HEK293 (cell line): ENCODE measurements at regions of chr11 and their contacts with region 1.

Region 1: DNA sequence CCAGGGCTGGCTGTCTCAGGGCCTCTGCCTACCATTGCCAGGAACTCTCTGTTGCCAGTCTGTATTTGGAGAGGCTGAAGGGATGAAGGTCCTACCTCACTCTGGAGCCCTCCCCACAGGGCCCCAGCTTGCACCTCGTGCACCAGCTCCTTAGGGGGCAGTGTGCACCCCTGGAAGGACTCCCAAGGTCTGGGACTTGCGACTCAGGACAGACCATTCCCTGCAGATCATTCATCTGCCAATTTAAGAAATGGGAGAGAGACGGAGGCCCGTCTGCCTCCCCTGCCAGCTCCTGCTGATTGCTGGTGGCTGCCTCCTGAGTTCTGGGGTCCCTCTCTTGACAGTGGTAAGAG is 27.5 kb upstream of the MALAT1 start:
- H3K4me3 ChIP-seq: no peak overlapping the region
- H3K27ac ChIP-seq: peak overlapping the region; percentile 62
- H3K4me1 ChIP-seq: peaks cover 5% of the 10 kb centered on the region
- CTCF ChIP-seq: peak; percentile 42; the same call in 1 of the 2 replicates

Region 2: GRCh38 chr11:65459552-65459951 is 11.8 kb before region 1 on chr11:
- CTCF ChIA-PET with region 1: interaction called, 11 read pairs
- POLR2A ChIA-PET with region 1: no interaction called
- H3K4me3 ChIP-seq: no peak overlapping the region
- H3K27ac ChIP-seq: no peak overlapping the region
- H3K4me1 ChIP-seq: no peaks in the 10 kb centered on the region
- CTCF ChIP-seq: no peak

Region 3: GRCh38 chr11:65487413-65488272 is 16.3 kb after region 1 on chr11:
- CTCF ChIA-PET with region 1: interaction called, 17 read pairs
- POLR2A ChIA-PET with region 1: interaction called, 63 read pairs
- H3K4me3 ChIP-seq: no peak overlapping the region
- H3K27ac ChIP-seq: peak overlapping the region; percentile 72
- H3K4me1 ChIP-seq: peaks cover 37% of the 10 kb centered on the region
- CTCF ChIP-seq: 0 out of 2 replicates have a peak, but pooled peaks have one; percentile 31